Right ventricle myocardium inferior (tissue), 1 donor: ENCODE measurements at regions of chr5 and their contacts with region 1.

Region 1: DNA sequence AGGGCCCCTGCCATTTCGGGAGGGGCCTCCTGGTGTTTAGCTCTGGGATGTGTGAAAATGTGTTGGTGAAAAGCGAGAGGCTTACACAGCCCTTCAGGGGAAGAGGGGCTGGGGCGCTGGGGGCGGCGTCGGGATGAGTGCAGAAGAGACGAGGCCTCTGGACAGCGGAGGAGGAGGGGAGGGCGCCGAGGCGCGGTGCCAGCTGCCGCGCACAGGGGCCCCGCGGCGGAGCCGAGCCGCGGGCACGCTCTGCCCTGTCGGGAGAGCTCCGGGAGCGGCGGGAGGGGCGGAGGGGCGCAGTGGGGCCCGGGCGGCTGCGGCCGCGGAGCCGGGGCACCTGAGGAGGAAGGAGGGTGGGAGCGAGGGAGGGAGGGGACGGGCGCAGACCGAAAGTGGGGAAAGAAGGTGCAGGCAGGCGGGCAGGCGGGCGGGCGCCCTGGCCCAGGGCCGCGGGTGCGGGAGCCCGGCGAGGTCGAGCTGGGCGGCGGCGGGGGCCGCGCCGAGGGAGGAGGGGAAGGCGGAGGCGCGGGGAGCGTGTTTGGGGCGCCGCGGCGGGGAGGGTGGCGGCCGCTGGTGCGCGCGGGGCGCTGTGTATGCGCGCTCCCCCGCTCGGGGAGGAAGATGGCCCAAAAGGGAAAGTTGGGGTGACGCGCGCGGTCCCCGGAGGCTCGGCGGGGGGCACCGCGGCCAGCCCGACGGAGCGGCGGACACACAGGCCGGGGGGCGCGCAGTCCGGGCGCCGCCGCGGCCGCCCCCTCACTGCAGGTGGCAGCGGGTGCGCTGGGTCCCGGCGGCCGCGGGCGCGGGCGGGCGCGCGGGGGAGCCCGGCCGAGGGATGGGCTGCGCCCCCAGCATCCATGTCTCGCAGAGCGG is at the start of gene PDE8B:
- DNase-seq: no peak
- ATAC-seq: no peak
- total RNA-seq, gene PDE8B: 1.0 TPM

Region 2: DNA sequence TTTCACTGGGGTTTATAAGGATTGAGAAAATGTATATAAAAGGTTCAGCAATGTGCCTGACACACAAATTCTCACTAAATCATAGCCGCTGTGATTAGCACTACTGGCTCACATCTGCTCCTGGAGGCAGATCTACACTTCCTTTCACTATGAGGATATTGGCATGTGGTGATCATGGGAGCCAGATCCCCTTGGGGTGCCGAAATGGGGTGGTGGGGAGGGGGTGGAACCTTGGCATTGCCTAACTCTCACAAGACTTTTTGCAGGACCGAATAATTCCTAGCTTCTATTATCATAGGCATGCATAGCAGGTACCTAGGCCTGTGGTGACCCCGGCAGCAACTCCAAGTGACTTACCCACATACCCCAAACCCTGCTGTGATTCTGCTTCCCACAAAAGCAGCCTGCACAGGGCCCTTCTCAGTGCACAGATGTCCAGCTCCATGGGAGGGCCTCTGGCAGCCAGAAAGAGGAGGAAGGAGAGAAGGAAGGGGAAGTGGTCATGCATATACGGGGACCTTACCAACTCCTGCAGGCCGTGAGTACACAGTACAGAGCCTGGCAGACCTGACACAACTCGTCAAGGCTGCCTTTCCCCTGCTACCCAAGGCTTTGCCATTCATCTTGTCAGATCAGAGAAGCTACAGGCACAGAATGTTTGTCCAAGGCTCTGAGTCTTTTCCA is 868.5 kb before region 1 on chr5:
- intact Hi-C with region 1: no loop called
- DNase-seq: no peak
- ATAC-seq: peak; percentile 75

Region 3: GRCh38 chr5:76990899-76991459 is 219.3 kb before region 1 on chr5:
- intact Hi-C with region 1: no loop called
- DNase-seq: no peak
- ATAC-seq: no peak

Region 4: DNA sequence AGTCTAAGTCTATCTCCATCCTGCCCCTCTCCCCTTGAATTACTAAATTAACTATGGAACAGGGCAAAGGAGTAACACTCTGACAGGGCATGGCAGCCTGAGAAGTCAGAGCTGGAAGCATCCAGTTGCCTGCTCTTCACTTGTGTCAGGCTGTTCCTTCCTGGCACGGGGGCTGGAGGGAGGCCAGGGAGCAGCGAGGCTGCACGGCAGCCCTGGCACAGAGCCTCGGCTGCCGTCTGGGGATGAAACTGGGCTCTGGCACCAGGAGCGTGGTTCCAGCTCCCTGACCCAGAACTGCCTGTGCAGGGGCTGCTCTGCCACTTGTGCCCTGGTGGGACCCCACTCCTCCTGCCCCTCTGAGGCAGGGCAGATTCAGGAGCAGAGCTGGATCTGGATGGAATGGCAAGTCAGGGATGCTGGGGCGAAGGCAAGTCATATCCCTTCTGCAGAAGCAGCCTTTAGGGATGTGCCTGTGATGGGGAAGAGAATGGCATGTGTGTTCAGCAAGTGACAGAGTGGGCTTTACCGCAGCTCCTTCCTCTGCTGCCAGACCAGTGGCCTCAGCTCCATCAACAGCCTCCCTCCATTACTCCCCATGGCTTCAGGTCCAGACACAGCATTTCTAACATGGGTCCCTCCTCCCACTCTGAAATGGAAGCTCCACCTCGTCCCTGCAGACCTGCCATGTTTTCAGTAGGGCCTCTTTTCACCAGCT is 42.0 kb before region 1 on chr5:
- intact Hi-C with region 1: loop called (anchors 5 kb)
- DNase-seq: peak; percentile 82
- ATAC-seq: peak; percentile 87